Left ventricle myocardium superior (tissue), 1 donor: ENCODE measurements at regions of chrX and their contacts with region 1.

Region 1: DNA sequence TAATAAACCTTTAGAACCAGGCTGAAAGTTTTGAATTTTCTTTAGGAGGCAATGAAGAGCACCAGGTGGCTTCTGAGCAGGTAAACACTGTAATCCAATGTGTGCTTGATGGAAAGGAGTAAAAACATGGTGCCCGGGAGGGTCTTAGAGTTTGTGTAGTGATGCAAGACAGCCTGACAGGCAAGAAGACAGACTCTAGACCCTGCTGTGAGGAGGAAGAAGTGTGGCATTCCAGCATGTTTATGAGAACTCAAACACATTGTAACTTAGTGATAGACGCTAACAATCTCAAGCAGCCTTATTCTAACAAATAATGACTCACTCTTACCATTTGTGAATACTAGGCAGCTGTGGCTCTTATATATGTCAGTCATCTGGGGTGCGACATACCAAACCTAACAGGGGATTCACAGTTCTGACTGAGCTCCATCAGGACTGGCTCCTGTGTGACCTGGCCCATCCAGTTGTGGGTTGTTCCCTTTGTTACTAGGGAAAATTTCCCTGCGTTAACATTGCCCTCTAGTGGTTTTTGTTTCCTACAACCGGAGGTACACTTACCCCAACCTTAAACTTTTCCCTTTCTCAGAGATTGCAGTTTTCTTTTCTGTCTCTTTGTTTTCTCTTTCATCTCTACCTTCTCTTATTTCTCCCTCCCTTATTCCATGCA is 53.8 kb downstream of the VSIG4 start:
- DNase-seq: peak; percentile 23
- ATAC-seq: peak; percentile 86

Region 2: DNA sequence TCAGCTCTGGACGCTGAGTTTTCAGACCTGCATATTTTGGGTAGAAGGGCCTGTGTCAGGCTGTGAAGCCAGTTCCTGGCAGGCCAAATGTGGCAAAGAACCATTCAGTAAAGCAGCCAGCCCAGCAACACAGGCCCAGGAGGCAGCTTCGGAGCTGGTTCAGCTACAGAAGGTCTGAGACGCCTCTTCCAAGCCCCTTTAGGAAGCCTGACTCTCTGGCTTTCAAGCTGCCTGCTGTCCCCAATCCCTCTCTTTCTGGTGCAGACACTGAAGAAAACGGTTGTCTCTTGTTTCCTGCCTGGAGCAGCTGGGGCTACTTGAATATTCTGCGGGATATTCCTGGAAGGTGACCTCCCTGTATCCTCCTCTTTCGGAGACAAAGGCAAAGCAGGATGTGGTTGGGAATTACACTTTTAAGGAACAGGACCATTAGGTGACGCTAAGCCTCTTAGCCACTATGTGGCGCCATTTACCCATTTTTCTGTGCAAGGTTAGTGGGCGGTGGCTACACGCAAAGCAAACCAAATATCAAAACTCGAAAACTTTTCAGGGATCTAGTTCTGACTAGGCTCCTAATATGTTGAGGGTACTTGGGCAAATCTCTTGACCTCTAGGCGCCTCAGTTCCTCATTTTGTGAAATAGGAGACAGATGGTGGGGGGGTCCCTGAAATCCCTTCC is 404.3 kb before region 1 on chrX:
- intact Hi-C with region 1: loop called (anchors 2 kb)
- DNase-seq: no peak
- ATAC-seq: peak; percentile 79

Region 3: DNA sequence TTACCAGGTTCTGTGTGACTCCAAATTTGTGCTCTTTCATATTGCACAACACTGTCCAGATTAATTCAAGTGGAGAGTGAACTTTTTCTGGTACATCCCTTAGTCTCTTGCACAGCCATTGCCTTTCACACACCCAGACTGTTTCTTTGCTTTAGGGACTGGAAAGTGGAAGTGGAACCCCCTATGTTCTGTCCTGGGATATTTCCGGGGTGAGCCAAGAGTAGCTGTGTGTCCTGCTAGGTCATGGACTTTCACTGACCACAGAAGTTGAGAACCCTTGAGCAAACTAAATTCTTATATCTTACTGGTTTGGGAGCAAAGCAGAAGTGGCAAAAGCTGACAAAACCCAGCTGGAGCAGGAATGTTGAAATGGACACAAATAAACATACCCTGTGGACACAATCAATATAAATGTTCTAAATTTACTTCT is 64.1 kb after region 1 on chrX:
- intact Hi-C with region 1: no loop called
- DNase-seq: no peak
- ATAC-seq: peak; percentile 73